ENCODE measurements at regions of chr7 and their contacts with region 1.

Region 1: GRCh38 chr7:148987010-148987750 is 41.1 kb downstream of the PDIA4 start:
- DNase-seq: peak; percentile 88
- H3K4me3 Mint-ChIP-seq: peak overlapping the region; percentile 98
- H3K27ac Mint-ChIP-seq: peak overlapping the region; percentile 93
- H3K4me1 Mint-ChIP-seq: peaks cover 40% of the 10 kb centered on the region
- H3K27me3 Mint-ChIP-seq: peaks cover 7% of the 10 kb centered on the region

Region 2: DNA sequence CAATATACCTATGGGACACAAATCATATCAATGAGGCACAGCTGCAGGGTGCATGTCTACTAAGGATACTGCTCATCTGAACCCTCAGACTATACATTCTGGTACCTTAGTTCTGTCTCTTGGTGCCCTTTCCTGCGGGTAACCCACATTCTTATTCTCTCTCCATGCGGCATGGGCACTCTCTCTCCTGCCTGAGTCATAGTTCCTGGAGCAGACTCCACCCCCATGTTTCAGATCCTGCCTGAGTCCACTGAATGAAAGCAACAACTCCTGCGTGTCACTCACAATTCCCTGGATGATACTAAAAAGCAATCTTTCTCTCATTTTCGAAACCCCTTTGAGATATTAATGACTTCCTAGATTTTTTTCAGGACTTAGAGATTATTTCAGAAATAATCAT is 1049.8 kb before region 1 on chr7:
- CTCF ChIA-PET with region 1: no interaction called
- intact Hi-C with region 1: no loop called
- DNase-seq: no peak
- H3K4me3 Mint-ChIP-seq: no peak overlapping the region
- H3K27ac Mint-ChIP-seq: no peak overlapping the region
- H3K4me1 Mint-ChIP-seq: no peaks in the 10 kb centered on the region
- H3K27me3 Mint-ChIP-seq: no peaks in the 10 kb centered on the region

Region 3: GRCh38 chr7:148809856-148810255 is 177.3 kb before region 1 on chr7:
- CTCF ChIA-PET with region 1: no interaction called
- intact Hi-C with region 1: no loop called
- DNase-seq: no peak
- H3K4me3 Mint-ChIP-seq: no peak overlapping the region
- H3K27ac Mint-ChIP-seq: no peak overlapping the region
- H3K4me1 Mint-ChIP-seq: peaks cover 11% of the 10 kb centered on the region
- H3K27me3 Mint-ChIP-seq: no peaks in the 10 kb centered on the region

Region 4: GRCh38 chr7:148884299-148885022 is 102.7 kb before region 1 on chr7:
- CTCF ChIA-PET with region 1: no interaction called
- intact Hi-C with region 1: loop called (anchors 1 kb)
- DNase-seq: peak; percentile 93
- H3K4me3 Mint-ChIP-seq: peak overlapping the region; percentile 94
- H3K27ac Mint-ChIP-seq: peak overlapping the region; percentile 99
- H3K4me1 Mint-ChIP-seq: peaks cover 37% of the 10 kb centered on the region
- H3K27me3 Mint-ChIP-seq: no peaks in the 10 kb centered on the region

Region 5: GRCh38 chr7:149005241-149006050 is 18.3 kb after region 1 on chr7:
- CTCF ChIA-PET with region 1: interaction called, 13 read pairs
- intact Hi-C with region 1: no loop called
- DNase-seq: peak; percentile 88
- H3K4me3 Mint-ChIP-seq: no peak overlapping the region
- H3K27ac Mint-ChIP-seq: no peak overlapping the region
- H3K4me1 Mint-ChIP-seq: peaks cover 3% of the 10 kb centered on the region
- H3K27me3 Mint-ChIP-seq: no peaks in the 10 kb centered on the region

Region 6: DNA sequence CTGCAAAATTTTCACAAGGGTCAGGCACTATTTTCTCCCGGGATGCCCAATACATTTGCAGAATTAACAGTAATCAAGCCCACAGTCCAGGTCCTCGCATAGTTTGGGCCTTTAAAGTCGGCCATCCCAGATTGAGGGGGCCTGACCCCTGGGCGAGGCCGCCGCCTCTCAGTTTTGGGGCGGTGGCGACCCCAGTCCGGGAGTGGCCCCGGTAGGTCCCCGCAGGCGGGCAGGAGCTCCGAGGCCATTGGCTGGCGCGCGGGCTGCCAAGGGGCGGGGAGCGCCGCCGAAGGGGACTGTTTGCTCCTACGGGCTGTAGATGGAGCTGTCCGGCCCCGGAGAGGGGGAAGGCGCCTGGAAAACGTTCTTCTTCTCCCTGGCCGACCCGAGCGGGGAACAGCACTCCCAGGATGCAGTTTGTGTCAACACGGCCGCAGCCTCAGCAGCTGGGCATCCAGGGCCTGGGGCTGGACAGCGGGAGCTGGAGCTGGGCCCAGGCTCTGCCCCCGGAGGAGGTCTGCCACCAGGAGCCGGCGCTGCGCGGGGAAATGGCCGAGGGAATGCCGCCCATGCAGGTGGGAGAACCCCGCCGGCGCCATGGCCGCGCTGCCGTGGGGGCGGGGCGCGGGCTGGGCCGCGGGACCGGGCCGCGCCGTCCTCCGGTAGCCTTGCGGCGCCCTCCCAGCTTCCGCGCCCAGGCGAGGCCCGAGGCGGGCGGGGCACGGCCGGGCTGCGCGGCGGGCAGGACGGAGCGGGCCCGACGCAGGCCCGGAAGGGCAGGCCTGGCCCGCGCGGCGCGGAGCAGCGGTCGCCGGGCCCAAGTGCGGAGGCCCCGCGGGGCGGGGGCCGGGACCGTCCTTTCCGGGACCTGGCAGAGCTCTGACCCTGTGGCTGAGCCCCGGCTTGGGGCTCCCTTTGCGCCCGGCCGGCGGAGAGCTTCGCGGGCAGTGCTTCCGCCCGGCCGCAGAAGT is 208.3 kb after region 1 on chr7 and contains the start of gene ZNF282:
- CTCF ChIA-PET with region 1: no interaction called
- intact Hi-C with region 1: loop called (anchors 5 kb)
- DNase-seq: peak; percentile 85
- H3K4me3 Mint-ChIP-seq: peak within 1 kb of the TSS; percentile 85
- H3K27ac Mint-ChIP-seq: peak within 1 kb of the TSS; percentile 78
- H3K4me1 Mint-ChIP-seq: peaks cover 30% of the 10 kb centered on the region
- H3K27me3 Mint-ChIP-seq: no peaks in the 10 kb centered on the region
- total RNA-seq, gene ZNF282: 21.6 to 22.0 TPM

Region 7: GRCh38 chr7:149261829-149262617 is 274.8 kb after region 1 on chr7 and contains the start of gene ZNF783:
- CTCF ChIA-PET with region 1: no interaction called
- intact Hi-C with region 1: loop called (anchors 5 kb)
- DNase-seq: peak; percentile 85
- H3K4me3 Mint-ChIP-seq: peak within 1 kb of the TSS; percentile 75
- H3K27ac Mint-ChIP-seq: peak within 1 kb of the TSS; percentile 74
- H3K4me1 Mint-ChIP-seq: peaks cover 29% of the 10 kb centered on the region
- H3K27me3 Mint-ChIP-seq: no peaks in the 10 kb centered on the region
- total RNA-seq, gene ZNF783: 6.8 to 7.1 TPM

Region 8: GRCh38 chr7:149598721-149599306 is 611.6 kb after region 1 on chr7:
- CTCF ChIA-PET with region 1: no interaction called
- intact Hi-C with region 1: loop called (anchors 10 kb)
- DNase-seq: peak; percentile 69
- H3K4me3 Mint-ChIP-seq: no peak overlapping the region
- H3K27ac Mint-ChIP-seq: peak overlapping the region; percentile 51
- H3K4me1 Mint-ChIP-seq: peaks cover 36% of the 10 kb centered on the region
- H3K27me3 Mint-ChIP-seq: no peaks in the 10 kb centered on the region